Activated CD8-positive, alpha-beta T cell treated with anti-CD3 and anti-CD28 coated beads, Interleukin-2, amount 10 ng/mL, durations not matched to agents 7 days and 5 days (primary cell): ENCODE measurements at regions of chr18 and their contacts with region 1.

Region 1: DNA sequence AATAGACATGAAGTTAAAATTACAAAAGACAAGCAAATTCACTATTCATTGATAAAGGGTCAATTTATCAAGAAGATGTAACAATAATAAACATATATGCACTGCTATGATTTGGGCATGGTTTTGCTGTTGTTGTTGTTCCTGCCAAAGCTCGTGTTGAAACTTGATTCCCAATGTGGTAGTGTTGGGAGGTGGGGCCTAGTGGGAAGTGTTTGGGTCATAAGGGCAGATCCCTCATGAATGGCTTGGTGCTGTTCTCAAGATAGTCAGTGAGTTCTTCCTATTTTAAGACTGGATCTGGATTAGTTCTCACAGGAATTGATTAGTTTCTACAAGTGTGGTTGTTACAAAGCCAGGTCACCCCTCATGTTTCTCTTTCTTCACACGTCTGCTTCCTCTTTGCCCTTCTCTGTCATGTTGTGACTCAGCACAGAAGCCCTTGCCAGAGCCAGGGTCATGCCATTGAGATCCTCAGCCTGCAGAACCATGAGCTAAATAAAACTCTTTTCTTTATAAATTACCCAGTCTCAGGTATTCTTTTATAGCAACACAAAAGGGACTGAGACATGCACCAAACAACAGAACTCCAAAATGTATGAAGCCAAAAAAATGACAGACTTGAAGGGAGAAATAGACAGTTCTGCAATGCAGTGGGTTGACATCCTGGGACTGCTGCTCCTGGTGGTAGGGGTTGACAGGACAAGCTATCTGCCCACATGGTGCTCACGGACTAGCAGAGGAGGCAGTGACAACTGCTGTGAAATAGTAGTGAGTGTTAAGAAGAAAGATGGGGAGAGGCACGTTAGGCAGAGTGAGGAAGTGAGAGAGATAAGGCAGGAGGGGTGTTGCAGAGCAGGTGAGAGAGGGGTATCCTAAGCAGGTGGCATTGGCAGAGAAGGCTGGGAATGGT is 18.6 kb upstream of the SKA1 start:
- DNase-seq: peak; percentile 28
- ATAC-seq: no peak
- H3K4me3 Mint-ChIP-seq: no peak overlapping the region
- H3K27ac Mint-ChIP-seq: peak overlapping the region; percentile 51
- H3K4me1 Mint-ChIP-seq: peaks cover 17% of the 10 kb centered on the region
- H3K27me3 Mint-ChIP-seq: peaks cover 38% of the 10 kb centered on the region

Region 2: DNA sequence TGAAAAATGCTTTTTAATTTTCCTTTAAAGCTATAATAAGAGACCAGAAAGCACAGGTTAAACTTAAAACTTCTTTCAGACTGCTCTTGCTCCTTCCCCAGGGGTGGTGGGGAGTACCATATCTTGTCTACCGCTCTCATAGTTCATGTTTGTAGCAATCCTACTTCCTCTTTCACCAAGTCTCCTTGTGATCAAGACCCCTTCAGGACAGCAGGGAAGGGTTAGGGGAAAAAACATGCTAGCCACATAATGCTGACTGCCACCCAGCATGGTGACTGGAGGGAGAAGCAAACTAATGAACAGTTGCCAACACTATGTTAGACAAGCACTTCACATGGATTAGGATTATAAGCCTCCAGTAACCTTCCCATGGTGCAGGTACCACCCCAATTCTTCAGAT is 169.9 kb before region 1 on chr18:
- CTCF ChIA-PET with region 1: no interaction called
- POLR2A ChIA-PET with region 1: no interaction called
- DNase-seq: no peak
- ATAC-seq: no peak
- H3K4me3 Mint-ChIP-seq: no peak overlapping the region
- H3K27ac Mint-ChIP-seq: no peak overlapping the region
- H3K4me1 Mint-ChIP-seq: no peaks in the 10 kb centered on the region
- H3K27me3 Mint-ChIP-seq: peaks cover 36% of the 10 kb centered on the region

Region 3: GRCh38 chr18:50218432-50219197 is 137.7 kb before region 1 on chr18:
- CTCF ChIA-PET with region 1: interaction called, 85 read pairs
- POLR2A ChIA-PET with region 1: no interaction called
- DNase-seq: peak; percentile 57
- ATAC-seq: peak; percentile 69
- H3K4me3 Mint-ChIP-seq: no peak overlapping the region
- H3K27ac Mint-ChIP-seq: no peak overlapping the region
- H3K4me1 Mint-ChIP-seq: no peaks in the 10 kb centered on the region
- H3K27me3 Mint-ChIP-seq: peaks cover 13% of the 10 kb centered on the region

Region 4: DNA sequence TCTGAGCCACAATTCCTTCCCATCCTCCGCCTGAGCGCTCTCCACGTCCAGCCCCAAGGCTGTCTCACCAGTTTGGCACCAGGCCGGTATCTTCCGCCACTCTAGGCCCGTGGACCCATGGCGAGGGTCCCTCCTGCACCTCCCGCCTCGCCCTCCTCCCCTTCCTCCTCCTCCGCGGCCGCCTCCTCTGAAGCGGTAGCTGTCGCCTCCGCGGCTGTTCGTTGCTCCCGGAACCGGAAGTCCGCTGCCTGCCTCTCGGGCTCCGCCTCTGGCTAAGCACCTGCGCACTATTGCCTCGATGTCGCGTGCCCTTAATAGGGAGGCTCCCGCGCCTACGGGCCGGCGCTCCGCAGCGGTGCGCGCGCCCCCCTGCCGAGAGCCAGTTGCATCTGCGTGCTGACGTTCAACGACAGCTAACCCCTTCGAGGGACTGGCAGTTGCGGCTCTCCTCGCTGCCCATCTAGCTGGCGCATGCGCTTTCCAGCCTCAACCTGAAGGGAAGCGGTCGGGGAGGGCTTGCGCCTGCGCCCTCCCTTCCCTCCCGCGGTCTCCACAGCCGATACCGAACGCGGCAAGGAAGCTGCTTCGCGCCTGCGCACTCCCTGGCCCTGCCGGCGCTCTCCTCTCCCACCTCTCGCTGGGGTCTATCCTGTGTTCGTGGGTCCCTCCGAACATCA is 74.9 kb before region 1 on chr18 and contains the start of gene MBD1:
- CTCF ChIA-PET with region 1: interaction called, 47 read pairs
- POLR2A ChIA-PET with region 1: interaction called, 5 read pairs
- DNase-seq: peak; percentile 97
- ATAC-seq: peak; percentile 95
- H3K4me3 Mint-ChIP-seq: peak within 1 kb of the TSS; percentile 96
- H3K27ac Mint-ChIP-seq: peak within 1 kb of the TSS; percentile 94
- H3K4me1 Mint-ChIP-seq: peaks cover 64% of the 10 kb centered on the region
- H3K27me3 Mint-ChIP-seq: no peaks in the 10 kb centered on the region
- total RNA-seq, gene MBD1: 97.3 to 101 TPM

Region 5: DNA sequence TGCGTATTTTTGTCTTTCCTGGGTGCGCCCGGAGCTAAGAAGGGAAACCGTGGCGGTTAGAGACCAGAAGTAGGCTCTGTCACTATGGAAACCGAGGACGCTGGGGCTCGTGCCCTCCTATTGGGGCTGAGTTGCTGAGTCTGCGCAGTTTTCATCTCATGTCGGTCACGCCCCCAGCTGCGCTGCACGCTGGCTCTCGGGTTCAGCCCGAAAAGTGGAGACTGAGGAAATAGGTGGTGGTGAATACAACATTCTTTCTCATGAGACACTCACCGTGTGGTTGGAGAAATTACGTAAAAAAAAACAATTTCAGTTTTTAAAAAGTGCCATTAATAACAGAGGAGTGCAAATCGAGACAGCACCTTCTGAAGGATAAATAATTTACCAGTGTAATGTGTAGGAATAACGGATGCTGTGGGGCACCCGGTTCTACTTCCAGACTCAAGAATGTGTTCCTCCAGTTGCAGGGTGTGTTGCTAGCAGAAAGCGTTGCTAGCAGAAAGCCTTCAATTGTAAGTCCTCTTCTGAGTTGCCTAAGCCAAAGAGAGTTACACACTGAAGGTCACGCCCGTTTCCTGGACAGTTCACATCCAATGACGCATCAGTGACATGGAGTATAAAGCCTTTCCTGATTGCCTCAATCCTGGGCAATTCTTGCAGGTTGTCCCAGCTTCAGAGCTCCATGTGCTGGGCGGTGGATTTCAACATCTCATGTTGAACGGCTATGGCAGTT is 48.4 kb before region 1 on chr18:
- CTCF ChIA-PET with region 1: interaction called, 21 read pairs
- POLR2A ChIA-PET with region 1: interaction called, 3 read pairs
- DNase-seq: peak; percentile 97
- ATAC-seq: peak; percentile 100
- H3K4me3 Mint-ChIP-seq: peak overlapping the region; percentile 86
- H3K27ac Mint-ChIP-seq: peak overlapping the region; percentile 86
- H3K4me1 Mint-ChIP-seq: peaks cover 25% of the 10 kb centered on the region
- H3K27me3 Mint-ChIP-seq: peaks cover 20% of the 10 kb centered on the region

Region 6: DNA sequence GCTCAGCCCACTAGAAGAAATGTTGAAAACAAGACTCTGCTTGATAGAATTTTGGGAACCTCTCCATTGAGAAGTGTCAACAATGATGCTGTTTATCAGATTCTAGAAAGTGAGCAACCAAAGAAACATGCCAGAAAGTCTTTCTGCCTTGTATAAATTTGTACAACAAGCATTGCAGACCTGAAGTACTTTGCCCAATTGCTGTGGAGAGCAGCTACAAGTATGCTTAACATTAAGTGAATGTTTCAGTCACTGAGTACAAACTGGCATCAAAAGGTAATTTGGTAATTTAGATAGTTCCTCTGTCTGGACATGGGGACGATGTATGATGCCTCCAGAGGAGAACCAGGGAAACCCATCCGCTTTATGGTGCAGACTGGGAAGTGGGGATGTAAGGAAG is 14.8 kb before region 1 on chr18:
- CTCF ChIA-PET with region 1: interaction called, 10 read pairs
- POLR2A ChIA-PET with region 1: no interaction called
- DNase-seq: no peak
- ATAC-seq: no peak
- H3K4me3 Mint-ChIP-seq: no peak overlapping the region
- H3K27ac Mint-ChIP-seq: no peak overlapping the region
- H3K4me1 Mint-ChIP-seq: no peaks in the 10 kb centered on the region
- H3K27me3 Mint-ChIP-seq: peaks cover 1% of the 10 kb centered on the region

Region 7: GRCh38 chr18:50401888-50402287 is 45.6 kb after region 1 on chr18:
- CTCF ChIA-PET with region 1: no interaction called
- POLR2A ChIA-PET with region 1: no interaction called
- DNase-seq: no peak
- ATAC-seq: no peak
- H3K4me3 Mint-ChIP-seq: no peak overlapping the region
- H3K27ac Mint-ChIP-seq: no peak overlapping the region
- H3K4me1 Mint-ChIP-seq: no peaks in the 10 kb centered on the region
- H3K27me3 Mint-ChIP-seq: peaks cover 62% of the 10 kb centered on the region

Region 8: DNA sequence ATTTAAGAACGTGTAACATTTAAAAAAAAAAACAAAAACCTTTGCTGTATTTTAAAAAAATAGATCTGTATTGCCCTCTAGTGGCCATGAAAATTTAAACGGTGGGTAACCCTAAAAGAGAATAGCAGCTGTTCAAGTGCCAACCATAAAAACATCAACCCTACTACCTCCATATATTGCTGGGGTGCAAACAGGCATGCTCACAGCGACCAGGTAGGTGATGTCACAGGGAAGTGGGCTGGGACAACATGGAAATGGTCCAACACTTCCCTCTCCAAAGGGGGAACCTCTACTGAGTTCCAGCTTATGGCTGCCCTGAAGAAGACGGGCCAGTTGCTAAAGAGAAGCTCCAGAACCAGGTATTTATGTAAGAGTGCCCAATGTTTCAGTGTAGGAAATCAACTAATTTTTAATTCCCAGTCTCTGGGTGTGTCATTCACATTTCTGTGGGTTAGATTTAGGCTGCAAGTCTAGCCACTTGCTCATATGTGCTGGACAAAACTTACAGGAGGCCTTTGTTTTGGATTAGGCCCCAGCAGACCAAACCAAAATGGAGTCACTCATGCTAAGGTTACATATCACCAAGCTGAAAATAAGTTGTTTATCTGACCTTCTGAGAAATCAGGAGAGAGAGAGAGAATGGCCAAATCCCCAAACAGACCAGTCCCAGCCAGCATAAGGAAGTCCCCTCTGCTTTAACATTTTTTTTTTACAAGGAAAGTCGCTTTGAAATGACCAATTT is 73.1 kb after region 1 on chr18:
- CTCF ChIA-PET with region 1: interaction called, 13 read pairs
- POLR2A ChIA-PET with region 1: no interaction called
- DNase-seq: peak; percentile 29
- ATAC-seq: no peak
- H3K4me3 Mint-ChIP-seq: no peak overlapping the region
- H3K27ac Mint-ChIP-seq: no peak overlapping the region
- H3K4me1 Mint-ChIP-seq: no peaks in the 10 kb centered on the region
- H3K27me3 Mint-ChIP-seq: peaks cover 25% of the 10 kb centered on the region